ENCODE measurements at regions of chr7 and their contacts with region 1.

Region 1: GRCh38 chr7:82810558-82811259 is 352.0 kb downstream of the PCLO start:
- DNase-seq: no peak
- H3K4me3 ChIP-seq: no peak overlapping the region
- H3K27ac ChIP-seq: no peak overlapping the region
- H3K4me1 ChIP-seq: no peaks in the 10 kb centered on the region
- H3K27me3 ChIP-seq: no peaks in the 10 kb centered on the region
- CTCF ChIP-seq: peak; percentile 45

Region 2: DNA sequence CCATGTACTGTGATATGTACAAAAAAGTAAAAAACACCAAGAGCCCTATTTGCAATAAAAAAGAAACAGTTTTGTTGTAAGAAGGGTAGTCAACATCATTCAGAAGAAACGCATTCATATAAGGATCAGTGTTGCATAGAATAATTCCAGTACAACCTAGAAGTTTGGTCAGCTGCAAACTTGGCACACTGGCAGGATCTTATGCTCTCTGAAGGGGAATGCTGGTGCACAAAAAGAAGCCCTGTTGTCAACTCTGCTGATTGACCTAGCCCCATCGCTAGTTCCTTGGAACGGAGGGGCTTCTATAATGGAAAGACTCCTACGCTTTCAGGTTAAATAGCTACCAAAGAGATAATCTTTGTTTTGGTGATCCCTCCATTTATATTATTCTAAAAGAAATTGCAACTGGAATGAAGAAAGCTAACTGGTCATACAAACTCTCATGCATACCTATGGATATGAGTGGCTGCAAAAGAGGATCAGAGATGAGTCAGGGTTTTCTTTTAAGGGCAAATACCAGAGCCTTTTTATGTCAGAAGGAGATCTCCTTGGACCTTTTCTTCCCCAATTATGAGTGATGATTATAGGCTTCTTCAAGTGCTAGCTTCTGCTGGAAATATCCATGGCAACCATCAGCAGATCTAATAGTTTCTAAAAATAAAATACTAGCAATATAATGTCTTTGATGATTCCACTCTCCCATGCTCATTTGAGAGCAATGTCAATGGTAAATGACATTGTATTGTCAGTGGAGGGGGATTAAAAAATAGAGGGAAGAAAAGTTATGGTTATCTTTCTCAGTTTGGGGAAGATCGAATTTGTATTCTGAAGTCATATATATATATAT is 54.8 kb before region 1 on chr7:
- intact Hi-C with region 1: no loop called
- DNase-seq: no peak
- H3K4me3 ChIP-seq: no peak overlapping the region
- H3K27ac ChIP-seq: no peak overlapping the region
- H3K4me1 ChIP-seq: no peaks in the 10 kb centered on the region
- H3K27me3 ChIP-seq: no peaks in the 10 kb centered on the region
- CTCF ChIP-seq: no peak

Region 3: GRCh38 chr7:83072576-83073517 is 262.1 kb after region 1 on chr7:
- intact Hi-C with region 1: loop called (anchors 5 kb)
- DNase-seq: no peak
- H3K4me3 ChIP-seq: no peak overlapping the region
- H3K27ac ChIP-seq: no peak overlapping the region
- H3K4me1 ChIP-seq: no peaks in the 10 kb centered on the region
- H3K27me3 ChIP-seq: no peaks in the 10 kb centered on the region
- CTCF ChIP-seq: peak; percentile 16

Region 4: DNA sequence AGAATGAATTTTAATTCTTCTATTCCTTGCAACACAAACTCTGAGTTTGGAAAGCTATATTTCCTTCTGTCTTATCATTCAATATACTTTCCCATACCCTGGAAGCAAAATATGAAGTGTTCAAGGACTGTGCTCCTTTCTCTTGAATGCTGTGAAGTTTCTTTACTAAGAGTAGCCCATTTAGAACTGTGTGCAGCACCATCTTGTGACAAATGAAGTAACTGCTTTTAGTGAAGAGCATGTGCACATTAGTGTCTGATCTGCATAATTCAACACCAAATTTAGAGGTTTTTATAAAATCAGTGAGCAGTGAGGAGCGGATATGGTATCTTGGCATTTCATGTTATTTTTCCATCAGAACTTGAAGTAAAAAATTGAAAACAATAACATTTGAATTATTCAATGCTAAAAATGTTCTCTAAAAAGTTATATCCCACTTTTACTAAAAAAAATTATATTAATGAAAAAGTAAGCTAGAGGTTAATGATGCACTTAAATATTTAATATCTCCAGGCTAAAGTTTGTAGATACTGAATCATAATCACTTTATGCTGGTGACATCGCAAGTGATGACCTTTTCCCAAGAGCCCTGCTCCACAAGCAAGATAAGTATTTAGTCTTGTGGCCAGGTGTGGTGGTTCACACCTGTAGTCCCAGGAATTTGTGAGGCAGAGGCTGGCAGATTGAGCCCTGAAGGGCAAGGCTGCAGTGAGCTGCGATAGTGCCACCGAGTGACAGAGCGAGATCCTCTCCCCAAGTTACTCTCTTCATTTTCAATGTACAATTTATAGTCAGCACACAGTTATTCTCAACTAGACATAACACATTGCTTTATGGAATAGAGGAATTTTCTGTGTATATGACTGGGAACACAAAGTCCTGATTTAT is 460.7 kb after region 1 on chr7:
- intact Hi-C with region 1: loop called (anchors 2 kb)
- DNase-seq: no peak
- H3K4me3 ChIP-seq: no peak overlapping the region
- H3K27ac ChIP-seq: no peak overlapping the region
- H3K4me1 ChIP-seq: no peaks in the 10 kb centered on the region
- H3K27me3 ChIP-seq: no peaks in the 10 kb centered on the region
- CTCF ChIP-seq: no peak

Region 5: DNA sequence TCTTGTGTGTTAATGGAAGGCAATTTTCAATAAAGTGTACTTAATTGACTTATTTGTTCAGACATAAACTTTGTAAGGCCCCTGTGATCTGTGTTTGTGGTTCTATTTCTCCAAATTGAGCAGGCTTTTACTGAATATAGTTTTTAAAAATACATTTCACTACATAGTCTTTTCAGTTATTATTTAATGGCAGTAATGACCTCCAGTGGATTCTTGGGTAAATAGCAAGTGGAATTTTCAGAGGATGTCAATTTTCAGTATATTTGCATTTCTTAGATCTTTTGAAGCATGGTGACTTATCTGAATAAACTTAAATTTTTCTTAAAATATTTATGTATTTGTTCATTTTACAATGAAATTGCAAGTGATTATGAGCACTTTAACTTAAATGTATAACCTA is 555.0 kb after region 1 on chr7:
- intact Hi-C with region 1: loop called (anchors 5 kb)
- DNase-seq: no peak
- H3K4me3 ChIP-seq: no peak overlapping the region
- H3K27ac ChIP-seq: no peak overlapping the region
- H3K4me1 ChIP-seq: no peaks in the 10 kb centered on the region
- H3K27me3 ChIP-seq: no peaks in the 10 kb centered on the region
- CTCF ChIP-seq: no peak